B cell (primary cell): ENCODE measurements at regions of chr17 and their contacts with region 1.

Region 1: DNA sequence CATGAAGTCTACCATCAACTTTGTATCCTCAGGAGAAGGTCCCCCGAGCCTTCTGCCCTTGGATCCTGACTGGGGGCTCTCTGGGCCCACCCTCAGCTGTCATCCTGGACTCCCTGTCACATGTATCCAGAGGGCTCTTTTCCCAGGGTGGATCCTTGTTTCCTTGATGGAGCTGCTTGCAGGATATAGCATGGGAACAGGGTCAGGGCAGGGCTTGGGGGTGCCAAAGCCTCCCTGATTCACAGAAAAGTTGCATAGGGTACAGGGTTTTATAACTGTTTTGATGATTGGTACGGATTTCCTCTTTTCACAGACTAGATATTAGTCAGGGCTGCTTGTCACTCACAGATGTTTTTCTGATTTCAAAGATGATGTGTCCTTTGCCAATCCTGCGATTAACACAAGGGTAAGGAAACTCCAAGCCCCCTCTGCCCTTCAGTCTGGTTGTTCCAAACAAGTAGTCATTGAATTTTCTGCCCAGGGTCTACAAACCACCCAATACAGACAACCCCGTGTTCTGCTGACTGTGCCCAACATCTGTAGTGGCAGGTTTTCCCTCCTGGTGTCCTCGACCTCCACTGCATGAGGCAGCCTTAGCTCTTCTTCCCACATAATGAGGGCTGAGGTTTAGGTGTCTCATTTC is 20.6 kb upstream of the SLC35G3 start:
- DNase-seq: no peak
- ATAC-seq: no peak
- H3K4me3 ChIP-seq: no peak overlapping the region
- H3K4me3 Mint-ChIP-seq: no peak overlapping the region
- H3K27ac ChIP-seq: no peak overlapping the region
- H3K27ac Mint-ChIP-seq: no peak overlapping the region
- H3K4me1 ChIP-seq: no peaks in the 10 kb centered on the region
- H3K4me1 Mint-ChIP-seq: peaks cover 7% of the 10 kb centered on the region
- H3K27me3 ChIP-seq: peaks cover 0 to 14% (median 2%) of the 10 kb centered on the region in 4 experiments
- H3K27me3 Mint-ChIP-seq: peaks cover 21% of the 10 kb centered on the region
- CTCF ChIP-seq: no peak

Region 2: DNA sequence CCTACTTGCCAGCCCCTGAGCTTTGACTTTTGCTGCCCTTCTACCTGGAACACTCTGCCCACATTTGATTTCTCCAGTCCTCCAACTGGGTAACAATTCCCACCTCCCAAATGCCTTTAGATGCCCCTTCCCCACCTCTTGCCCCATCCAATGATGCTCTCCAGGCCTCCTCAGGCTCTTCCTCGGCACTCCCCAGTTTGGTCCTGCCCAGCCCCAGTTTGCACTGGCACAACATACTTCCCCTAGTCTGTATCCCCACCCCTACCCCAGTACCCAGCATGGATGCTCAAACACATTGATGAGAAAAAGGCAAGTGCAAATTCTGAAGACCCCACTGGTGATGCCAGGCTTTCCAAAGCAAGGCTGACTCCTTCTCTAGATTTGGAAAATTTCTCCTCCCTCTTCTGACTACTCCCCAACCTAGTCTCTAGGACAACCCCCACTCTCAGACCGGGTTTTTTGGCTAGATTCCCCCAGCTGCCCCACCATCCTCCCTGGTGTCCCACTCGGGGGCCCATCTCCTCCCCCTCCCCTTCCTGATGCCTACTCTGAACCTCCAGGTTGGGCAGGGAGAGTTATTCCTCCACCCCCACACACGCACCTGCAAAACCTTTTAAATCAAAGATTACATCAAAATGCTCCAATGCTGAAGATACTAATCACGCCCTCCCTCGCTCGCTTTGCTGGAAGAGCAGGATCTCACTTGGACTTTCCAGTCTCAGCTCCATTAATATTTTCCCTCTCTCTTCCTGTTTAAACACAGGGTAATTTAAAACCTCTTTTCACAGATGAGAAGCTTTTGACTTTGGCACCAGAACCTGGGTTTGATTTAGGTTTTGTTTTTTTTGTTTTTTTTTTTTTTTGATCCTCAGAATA is 540.5 kb before region 1 on chr17:
- CTCF ChIA-PET with region 1: no interaction called
- POLR2A ChIA-PET with region 1: no interaction called
- intact Hi-C with region 1: no loop called
- DNase-seq: no peak
- ATAC-seq: no peak
- H3K4me3 ChIP-seq: no peak overlapping the region
- H3K4me3 Mint-ChIP-seq: no peak overlapping the region
- H3K27ac ChIP-seq: no peak overlapping the region
- H3K27ac Mint-ChIP-seq: no peak overlapping the region
- H3K4me1 ChIP-seq: no peaks in the 10 kb centered on the region
- H3K4me1 Mint-ChIP-seq: no peaks in the 10 kb centered on the region
- H3K27me3 ChIP-seq: peaks cover 0 to 3% (median 0%) of the 10 kb centered on the region in 4 experiments
- H3K27me3 Mint-ChIP-seq: peaks cover 36% of the 10 kb centered on the region
- CTCF ChIP-seq: no peak

Region 3: DNA sequence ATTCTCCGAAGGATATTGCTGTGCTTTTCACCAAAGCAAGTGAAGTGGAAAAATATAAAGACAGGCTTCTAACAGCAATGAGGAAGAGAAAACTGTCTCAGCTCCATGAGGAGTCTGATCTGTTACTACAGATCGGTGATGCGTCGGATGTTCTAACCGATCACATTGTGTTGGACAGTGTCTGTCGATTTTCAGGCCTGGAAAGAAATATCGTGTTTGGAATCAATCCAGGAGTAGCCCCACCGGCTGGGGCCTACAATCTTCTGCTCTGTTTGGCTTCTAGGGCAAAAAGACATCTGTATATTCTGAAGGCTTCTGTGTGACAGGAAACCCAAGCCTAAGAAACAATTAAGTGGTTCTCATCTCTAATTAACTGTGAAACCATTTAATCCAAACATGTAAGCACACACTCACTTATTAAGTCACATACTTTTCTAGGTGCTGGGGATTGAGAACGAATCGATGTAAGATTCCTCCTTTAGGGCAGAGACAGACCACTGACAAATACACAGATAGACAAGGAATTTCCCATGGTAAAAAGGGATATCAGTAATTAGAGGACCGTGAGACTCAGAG is 50.9 kb after region 1 on chr17:
- CTCF ChIA-PET with region 1: no interaction called
- POLR2A ChIA-PET with region 1: no interaction called
- intact Hi-C with region 1: loop called (anchors 10 kb)
- DNase-seq: no peak
- ATAC-seq: no peak
- H3K4me3 ChIP-seq: no peak overlapping the region
- H3K4me3 Mint-ChIP-seq: no peak overlapping the region
- H3K27ac ChIP-seq: no peak overlapping the region
- H3K27ac Mint-ChIP-seq: no peak overlapping the region
- H3K4me1 ChIP-seq: no peaks in the 10 kb centered on the region
- H3K4me1 Mint-ChIP-seq: no peaks in the 10 kb centered on the region
- H3K27me3 ChIP-seq: peaks cover 0 to 5% (median 0%) of the 10 kb centered on the region in 4 experiments
- H3K27me3 Mint-ChIP-seq: no peaks in the 10 kb centered on the region
- CTCF ChIP-seq: no peak

Region 4: DNA sequence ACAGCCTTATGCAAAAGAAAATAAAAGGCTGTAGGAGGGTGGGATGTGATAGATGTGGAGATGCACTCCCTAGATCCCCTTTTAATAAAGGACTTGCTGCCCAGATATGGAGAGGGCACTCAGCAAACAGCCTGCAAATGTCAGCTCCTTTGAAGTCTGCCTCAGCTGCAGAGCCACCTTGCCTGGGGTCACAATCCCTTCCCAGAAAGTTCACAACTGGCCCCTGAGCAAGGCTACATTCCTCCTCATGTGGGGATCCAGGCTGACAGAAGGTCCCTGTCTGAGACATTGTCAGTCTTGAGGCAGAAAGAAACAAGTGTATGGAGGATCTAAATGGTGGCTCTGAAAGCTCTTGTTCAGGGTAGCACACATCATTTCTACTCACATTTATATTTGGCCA is 122.6 kb after region 1 on chr17:
- CTCF ChIA-PET with region 1: no interaction called
- POLR2A ChIA-PET with region 1: no interaction called
- intact Hi-C with region 1: no loop called
- DNase-seq: no peak
- ATAC-seq: no peak
- H3K4me3 ChIP-seq: no peak overlapping the region
- H3K4me3 Mint-ChIP-seq: no peak overlapping the region
- H3K27ac ChIP-seq: no peak overlapping the region
- H3K27ac Mint-ChIP-seq: no peak overlapping the region
- H3K4me1 ChIP-seq: peaks cover 14 to 15% of the 10 kb centered on the region in 2 donors
- H3K4me1 Mint-ChIP-seq: peaks cover 14% of the 10 kb centered on the region
- H3K27me3 ChIP-seq: no peaks in the 10 kb centered on the region
- H3K27me3 Mint-ChIP-seq: no peaks in the 10 kb centered on the region
- CTCF ChIP-seq: no peak